CD4-positive, alpha-beta T cell (primary cell): ENCODE measurements at regions of chr1 and their contacts with region 1.

Region 1: GRCh38 chr1:2586154-2587070 is at the start of gene PRXL2B:
- DNase-seq: peak; percentile 92 to 99 (median 97)
- ATAC-seq: peak; percentile 61
- H3K4me3 ChIP-seq: peak within 1 kb of the TSS; percentile 85
- H3K4me3 Mint-ChIP-seq: peak within 1 kb of the TSS; percentile 99
- H3K27ac ChIP-seq: peak within 1 kb of the TSS; percentile 97 to 99
- H3K27ac Mint-ChIP-seq: peak within 1 kb of the TSS; percentile 98
- H3K4me1 ChIP-seq: peaks cover 62% of the 10 kb centered on the region
- H3K4me1 Mint-ChIP-seq: peaks cover 38% of the 10 kb centered on the region
- H3K27me3 ChIP-seq: no peaks in the 10 kb centered on the region
- H3K27me3 Mint-ChIP-seq: no peaks in the 10 kb centered on the region
- CTCF ChIP-seq: no peak
- total RNA-seq, gene PRXL2B: 11.0 to 12.8 TPM

Region 2: GRCh38 chr1:2391041-2391930 is 195.1 kb before region 1 on chr1 and contains the starts of genes MORN1 and RER1:
- CTCF ChIA-PET with region 1: interaction called, 3 read pairs
- POLR2A ChIA-PET with region 1: interaction called, 19 read pairs
- intact Hi-C with region 1: no loop called
- DNase-seq: peak; percentile 97 to 100 (median 99)
- ATAC-seq: peak; percentile 95
- H3K4me3 ChIP-seq: peak within 1 kb of the TSS; percentile 64
- H3K4me3 Mint-ChIP-seq: peak within 1 kb of the TSS; percentile 95
- H3K27ac ChIP-seq: peak within 1 kb of the TSS; percentile 60 to 63
- H3K27ac Mint-ChIP-seq: peak within 1 kb of the TSS; percentile 88
- H3K4me1 ChIP-seq: peaks cover 45% of the 10 kb centered on the region
- H3K4me1 Mint-ChIP-seq: peaks cover 31% of the 10 kb centered on the region
- H3K27me3 ChIP-seq: no peaks in the 10 kb centered on the region
- H3K27me3 Mint-ChIP-seq: no peaks in the 10 kb centered on the region
- CTCF ChIP-seq: no peak
- total RNA-seq, gene MORN1: 5.3 to 6.5 TPM
- total RNA-seq, gene RER1: 57.9 to 60.7 TPM

Region 3: GRCh38 chr1:2545759-2546514 is 40.5 kb before region 1 on chr1:
- CTCF ChIA-PET with region 1: interaction called, 18 read pairs
- POLR2A ChIA-PET with region 1: interaction called, 109 read pairs
- intact Hi-C with region 1: loop called in 1 of 2 experiments (anchors 2 kb)
- DNase-seq: peak; percentile 82 to 97 (median 88)
- ATAC-seq: peak; percentile 45
- H3K4me3 ChIP-seq: peak overlapping the region; percentile 81
- H3K4me3 Mint-ChIP-seq: peak overlapping the region; percentile 95
- H3K27ac ChIP-seq: peak overlapping the region; percentile 96 to 99
- H3K27ac Mint-ChIP-seq: peak overlapping the region; percentile 99
- H3K4me1 ChIP-seq: peaks cover 70% of the 10 kb centered on the region
- H3K4me1 Mint-ChIP-seq: peaks cover 38% of the 10 kb centered on the region
- H3K27me3 ChIP-seq: peaks cover 0 to 2% of the 10 kb centered on the region in 2 experiments
- H3K27me3 Mint-ChIP-seq: no peaks in the 10 kb centered on the region
- CTCF ChIP-seq: no peak

Region 4: DNA sequence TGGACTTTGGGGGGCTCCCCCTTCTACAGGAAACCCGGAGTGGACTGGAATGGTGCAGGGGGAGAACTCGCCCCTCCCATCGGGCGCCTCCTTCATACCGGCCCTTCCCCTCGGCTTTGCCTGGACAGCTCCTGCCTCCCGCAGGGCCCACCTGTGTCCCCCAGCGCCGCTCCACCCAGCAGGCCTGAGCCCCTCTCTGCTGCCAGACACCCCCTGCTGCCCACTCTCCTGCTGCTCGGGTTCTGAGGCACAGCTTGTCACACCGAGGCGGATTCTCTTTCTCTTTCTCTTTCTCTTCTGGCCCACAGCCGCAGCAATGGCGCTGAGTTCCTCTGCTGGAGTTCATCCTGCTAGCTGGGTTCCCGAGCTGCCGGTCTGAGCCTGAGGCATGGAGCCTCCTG is 30.1 kb before region 1 on chr1 and contains the start of gene TNFRSF14:
- CTCF ChIA-PET with region 1: interaction called, 38 read pairs
- POLR2A ChIA-PET with region 1: interaction called, 133 read pairs
- intact Hi-C with region 1: loop called (anchors 1 kb)
- DNase-seq: peak; percentile 54 to 90 (median 62)
- ATAC-seq: peak; percentile 79
- H3K4me3 ChIP-seq: peak within 1 kb of the TSS; percentile 99
- H3K4me3 Mint-ChIP-seq: peak within 1 kb of the TSS; percentile 97
- H3K27ac ChIP-seq: peak within 1 kb of the TSS; percentile 96
- H3K27ac Mint-ChIP-seq: peak within 1 kb of the TSS; percentile 98
- H3K4me1 ChIP-seq: peaks cover 59% of the 10 kb centered on the region
- H3K4me1 Mint-ChIP-seq: peaks cover 35% of the 10 kb centered on the region
- H3K27me3 ChIP-seq: no peaks in the 10 kb centered on the region
- H3K27me3 Mint-ChIP-seq: no peaks in the 10 kb centered on the region
- CTCF ChIP-seq: peak; percentile 24
- total RNA-seq, gene TNFRSF14: 191 to 194 TPM

Region 5: GRCh38 chr1:2561898-2562545 is 24.4 kb before region 1 on chr1:
- CTCF ChIA-PET with region 1: interaction called, 20 read pairs
- POLR2A ChIA-PET with region 1: interaction called, 133 read pairs
- intact Hi-C with region 1: no loop called
- DNase-seq: peak in 2 of 14 experiments; percentile 35 to 46
- ATAC-seq: peak; percentile 47
- H3K4me3 ChIP-seq: no peak overlapping the region
- H3K4me3 Mint-ChIP-seq: no peak overlapping the region
- H3K27ac ChIP-seq: peak overlapping the region in 1 of 2 donors; percentile 34
- H3K27ac Mint-ChIP-seq: peak overlapping the region; percentile 76
- H3K4me1 ChIP-seq: peaks cover 43% of the 10 kb centered on the region
- H3K4me1 Mint-ChIP-seq: peaks cover 11% of the 10 kb centered on the region
- H3K27me3 ChIP-seq: no peaks in the 10 kb centered on the region
- H3K27me3 Mint-ChIP-seq: no peaks in the 10 kb centered on the region
- CTCF ChIP-seq: no peak

Region 6: GRCh38 chr1:2575801-2576663 is 10.4 kb before region 1 on chr1:
- CTCF ChIA-PET with region 1: interaction called, 5 read pairs
- POLR2A ChIA-PET with region 1: interaction called, 30 read pairs
- intact Hi-C with region 1: loop called in 1 of 2 experiments (anchors 1 kb)
- DNase-seq: peak in 1 of 14 experiments; percentile 40
- ATAC-seq: no peak
- H3K4me3 ChIP-seq: no peak overlapping the region
- H3K4me3 Mint-ChIP-seq: no peak overlapping the region
- H3K27ac ChIP-seq: no peak overlapping the region
- H3K27ac Mint-ChIP-seq: peak overlapping the region; percentile 49
- H3K4me1 ChIP-seq: peaks cover 55% of the 10 kb centered on the region
- H3K4me1 Mint-ChIP-seq: peaks cover 44% of the 10 kb centered on the region
- H3K27me3 ChIP-seq: no peaks in the 10 kb centered on the region
- H3K27me3 Mint-ChIP-seq: no peaks in the 10 kb centered on the region
- CTCF ChIP-seq: no peak

Region 7: GRCh38 chr1:2642560-2643413 is 56.4 kb after region 1 on chr1:
- CTCF ChIA-PET with region 1: interaction called, 4 read pairs
- POLR2A ChIA-PET with region 1: interaction called, 14 read pairs
- intact Hi-C with region 1: loop called (anchors 1 to 2 kb)
- DNase-seq: peak; percentile 89 to 97 (median 94)
- ATAC-seq: peak; percentile 84
- H3K4me3 ChIP-seq: peak overlapping the region; percentile 61
- H3K4me3 Mint-ChIP-seq: peak overlapping the region; percentile 89
- H3K27ac ChIP-seq: peak overlapping the region; percentile 69 to 96
- H3K27ac Mint-ChIP-seq: peak overlapping the region; percentile 89
- H3K4me1 ChIP-seq: peaks cover 29% of the 10 kb centered on the region
- H3K4me1 Mint-ChIP-seq: peaks cover 12% of the 10 kb centered on the region
- H3K27me3 ChIP-seq: no peaks in the 10 kb centered on the region
- H3K27me3 Mint-ChIP-seq: no peaks in the 10 kb centered on the region
- CTCF ChIP-seq: no peak